ENCODE measurements at regions of chr11 and their contacts with region 1.

Region 1: DNA sequence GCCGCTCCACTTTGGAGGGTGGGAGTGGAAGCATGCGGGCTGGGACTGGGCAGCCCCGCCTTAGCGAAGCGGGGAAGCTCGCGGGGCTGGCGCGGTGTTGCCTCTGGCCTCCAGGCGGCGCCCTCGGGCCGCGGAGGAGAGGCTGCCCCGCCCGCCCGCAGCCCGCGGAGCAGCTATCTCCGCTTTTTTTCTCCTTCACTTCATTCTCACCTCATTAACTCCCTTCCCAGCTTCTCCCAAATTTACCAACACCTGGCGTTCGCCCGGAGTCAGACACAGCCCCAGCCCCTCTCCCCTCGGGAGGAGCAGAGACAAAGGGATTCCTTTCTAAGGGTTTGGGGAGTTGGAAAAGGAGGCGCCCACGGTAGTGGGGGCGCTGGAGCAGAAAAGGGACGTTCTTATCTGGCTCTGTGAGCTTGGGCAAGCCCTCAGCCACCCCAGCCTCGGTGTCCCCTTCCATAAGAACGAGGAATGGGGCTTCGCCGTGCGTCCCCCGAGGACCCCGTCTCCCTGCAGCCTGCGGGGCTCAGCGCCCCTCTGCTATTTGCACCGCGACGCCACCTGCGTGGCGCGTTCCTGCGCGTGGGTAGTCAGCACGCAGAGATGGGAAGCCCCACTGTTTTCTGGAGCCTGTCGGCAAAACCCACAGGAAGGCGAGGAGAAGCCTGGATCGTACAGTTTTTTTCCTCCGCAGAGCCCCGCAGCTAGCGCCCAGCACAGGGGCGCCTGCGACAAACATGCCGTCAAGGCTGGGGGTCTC is 1.5 kb upstream of the WNT11 start:
- DNase-seq: peak; percentile 79
- ATAC-seq: peak; percentile 73
- H3K4me3 Mint-ChIP-seq: peak overlapping the region; percentile 74
- H3K27ac Mint-ChIP-seq: no peak overlapping the region
- H3K4me1 Mint-ChIP-seq: peaks cover 23% of the 10 kb centered on the region
- H3K27me3 Mint-ChIP-seq: peaks cover 55% of the 10 kb centered on the region

Region 2: DNA sequence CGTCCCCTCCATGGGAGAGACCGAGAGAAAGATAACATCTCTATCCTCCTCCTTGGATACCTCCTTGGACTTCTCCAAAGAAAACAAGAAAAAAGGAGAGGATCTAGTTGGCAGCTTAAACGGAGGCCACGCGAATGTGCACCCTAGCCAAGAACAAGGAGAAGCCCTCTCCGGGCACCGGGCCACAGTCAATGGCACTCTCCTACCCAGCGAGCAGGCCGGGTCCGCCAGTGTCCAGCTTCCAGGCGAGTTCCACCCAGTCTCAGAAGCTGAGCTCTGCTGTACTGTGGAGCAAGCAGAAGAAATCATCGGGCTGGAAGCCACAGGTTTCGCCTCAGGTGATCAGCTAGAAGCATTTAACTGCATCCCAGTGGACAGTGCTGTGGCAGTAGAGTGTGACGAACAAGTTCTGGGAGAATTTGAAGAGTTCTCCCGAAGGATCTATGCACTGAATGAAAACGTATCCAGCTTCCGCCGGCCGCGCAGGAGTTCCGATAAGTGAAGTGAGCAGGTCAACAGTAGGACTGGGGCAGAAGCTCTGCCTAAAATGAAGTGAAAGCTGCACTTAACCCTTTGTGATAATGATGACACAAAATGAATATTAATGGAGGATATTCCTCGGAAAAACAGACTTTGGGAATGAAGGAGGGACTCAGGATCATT is 66.8 kb before region 1 on chr11:
- CTCF ChIA-PET with region 1: no interaction called
- POLR2A ChIA-PET with region 1: no interaction called
- DNase-seq: no peak
- ATAC-seq: no peak
- H3K4me3 Mint-ChIP-seq: no peak overlapping the region
- H3K27ac Mint-ChIP-seq: no peak overlapping the region
- H3K4me1 Mint-ChIP-seq: no peaks in the 10 kb centered on the region
- H3K27me3 Mint-ChIP-seq: no peaks in the 10 kb centered on the region

Region 3: GRCh38 chr11:76152086-76152681 is 55.6 kb before region 1 on chr11:
- CTCF ChIA-PET with region 1: interaction called, 19 read pairs
- POLR2A ChIA-PET with region 1: no interaction called
- DNase-seq: peak; percentile 88
- ATAC-seq: peak; percentile 95
- H3K4me3 Mint-ChIP-seq: peak overlapping the region; percentile 73
- H3K27ac Mint-ChIP-seq: peak overlapping the region; percentile 37
- H3K4me1 Mint-ChIP-seq: peaks cover 26% of the 10 kb centered on the region
- H3K27me3 Mint-ChIP-seq: peaks cover 7% of the 10 kb centered on the region

Region 4: DNA sequence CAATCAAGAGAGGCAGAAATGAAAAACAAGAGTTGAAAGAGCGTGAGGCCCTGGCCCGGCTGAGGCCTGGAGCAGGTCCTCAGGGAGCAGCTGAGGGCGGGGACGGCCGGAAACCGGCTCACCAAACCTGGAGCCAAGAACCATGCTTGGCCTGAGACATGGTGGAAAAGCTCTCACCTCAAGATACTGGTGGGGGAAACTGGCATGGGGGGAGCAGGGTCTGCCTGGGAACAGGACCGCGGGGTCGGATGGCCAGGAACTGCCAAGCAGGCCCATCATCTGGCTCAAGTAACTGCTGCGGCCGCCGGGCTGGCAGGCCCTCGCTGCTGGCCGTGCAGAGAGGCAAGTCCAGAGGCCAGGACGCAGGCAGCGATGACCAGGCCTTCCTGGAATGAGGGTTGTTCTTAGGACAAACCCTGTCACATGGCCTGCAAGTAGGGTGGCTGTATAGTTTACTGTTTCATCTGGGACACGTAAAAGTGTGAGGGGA is 17.3 kb after region 1 on chr11:
- CTCF ChIA-PET with region 1: interaction called, 58 read pairs
- POLR2A ChIA-PET with region 1: no interaction called
- DNase-seq: no peak
- ATAC-seq: no peak
- H3K4me3 Mint-ChIP-seq: no peak overlapping the region
- H3K27ac Mint-ChIP-seq: no peak overlapping the region
- H3K4me1 Mint-ChIP-seq: peaks cover 22% of the 10 kb centered on the region
- H3K27me3 Mint-ChIP-seq: peaks cover 12% of the 10 kb centered on the region

Region 5: GRCh38 chr11:76253416-76253815 is 45.6 kb after region 1 on chr11:
- CTCF ChIA-PET with region 1: interaction called, 10 read pairs
- POLR2A ChIA-PET with region 1: no interaction called
- DNase-seq: no peak
- ATAC-seq: no peak
- H3K4me3 Mint-ChIP-seq: no peak overlapping the region
- H3K27ac Mint-ChIP-seq: no peak overlapping the region
- H3K4me1 Mint-ChIP-seq: no peaks in the 10 kb centered on the region
- H3K27me3 Mint-ChIP-seq: peaks cover 3% of the 10 kb centered on the region

Region 6: GRCh38 chr11:76307396-76307795 is 99.6 kb after region 1 on chr11:
- CTCF ChIA-PET with region 1: interaction called, 29 read pairs
- POLR2A ChIA-PET with region 1: no interaction called
- DNase-seq: no peak
- ATAC-seq: no peak
- H3K4me3 Mint-ChIP-seq: no peak overlapping the region
- H3K27ac Mint-ChIP-seq: no peak overlapping the region
- H3K4me1 Mint-ChIP-seq: no peaks in the 10 kb centered on the region
- H3K27me3 Mint-ChIP-seq: peaks cover 8% of the 10 kb centered on the region

Region 7: DNA sequence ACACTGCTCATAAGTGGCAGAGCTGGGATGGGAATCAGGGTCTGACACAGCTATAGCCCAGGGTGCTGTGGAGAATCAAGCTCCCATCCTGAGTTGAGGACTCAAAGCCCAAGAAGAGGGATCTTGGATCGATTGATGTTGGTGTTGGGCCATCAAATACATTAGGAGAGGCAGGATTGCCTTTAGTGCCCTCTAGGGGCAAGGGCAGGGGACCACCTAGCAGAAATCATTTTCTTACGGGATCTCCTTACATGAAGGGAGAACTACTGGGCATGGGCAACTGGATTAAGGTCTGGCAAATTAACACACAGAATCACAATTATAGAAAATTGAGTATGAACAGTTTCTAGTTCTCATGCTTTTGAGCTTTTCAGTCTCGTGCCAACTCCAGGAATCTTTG is 212.1 kb after region 1 on chr11:
- CTCF ChIA-PET with region 1: interaction called, 10 read pairs
- POLR2A ChIA-PET with region 1: no interaction called
- DNase-seq: peak; percentile 33
- ATAC-seq: peak; percentile 65
- H3K4me3 Mint-ChIP-seq: no peak overlapping the region
- H3K27ac Mint-ChIP-seq: no peak overlapping the region
- H3K4me1 Mint-ChIP-seq: peaks cover 6% of the 10 kb centered on the region
- H3K27me3 Mint-ChIP-seq: peaks cover 13% of the 10 kb centered on the region

Region 8: DNA sequence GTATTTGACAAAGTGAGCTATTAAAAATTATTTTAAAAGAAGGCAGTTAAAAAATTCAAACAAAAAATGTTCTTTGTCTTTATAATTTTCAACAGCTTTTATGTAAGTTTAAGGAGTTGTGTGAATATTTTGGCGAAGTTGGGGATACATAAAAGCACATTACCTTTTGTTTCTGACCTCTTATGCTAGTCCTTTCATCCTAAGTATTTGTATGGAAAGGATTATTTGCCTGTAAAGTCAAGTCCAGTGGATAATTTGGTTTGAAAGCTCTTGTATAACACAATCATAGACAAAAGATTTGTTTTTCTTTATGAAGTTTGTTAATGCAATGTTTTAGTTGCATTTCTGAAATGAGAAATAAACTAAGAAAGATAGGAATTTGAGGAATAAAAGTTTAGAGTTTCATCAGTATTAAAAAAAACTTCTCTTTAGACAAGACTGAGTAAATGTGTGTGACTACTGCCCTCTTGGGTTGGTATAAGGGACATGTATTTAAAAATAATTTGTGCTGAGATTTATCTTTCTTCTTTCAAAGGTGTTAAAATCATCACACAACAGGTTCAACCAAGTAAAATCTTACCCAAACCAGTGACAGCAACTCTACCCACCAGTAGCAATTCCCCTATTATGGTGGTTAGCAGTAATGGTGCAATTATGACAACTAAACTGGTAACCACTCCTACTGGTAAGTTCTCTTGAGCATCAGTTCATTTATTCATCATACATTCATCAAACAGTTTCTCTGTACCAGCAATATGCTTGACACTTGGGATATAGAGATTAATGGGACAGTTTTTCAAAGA is 305.2 kb after region 1 on chr11:
- CTCF ChIA-PET with region 1: interaction called, 12 read pairs
- POLR2A ChIA-PET with region 1: no interaction called
- DNase-seq: no peak
- ATAC-seq: no peak
- H3K4me3 Mint-ChIP-seq: no peak overlapping the region
- H3K27ac Mint-ChIP-seq: no peak overlapping the region
- H3K4me1 Mint-ChIP-seq: no peaks in the 10 kb centered on the region
- H3K27me3 Mint-ChIP-seq: no peaks in the 10 kb centered on the region

Region 9: DNA sequence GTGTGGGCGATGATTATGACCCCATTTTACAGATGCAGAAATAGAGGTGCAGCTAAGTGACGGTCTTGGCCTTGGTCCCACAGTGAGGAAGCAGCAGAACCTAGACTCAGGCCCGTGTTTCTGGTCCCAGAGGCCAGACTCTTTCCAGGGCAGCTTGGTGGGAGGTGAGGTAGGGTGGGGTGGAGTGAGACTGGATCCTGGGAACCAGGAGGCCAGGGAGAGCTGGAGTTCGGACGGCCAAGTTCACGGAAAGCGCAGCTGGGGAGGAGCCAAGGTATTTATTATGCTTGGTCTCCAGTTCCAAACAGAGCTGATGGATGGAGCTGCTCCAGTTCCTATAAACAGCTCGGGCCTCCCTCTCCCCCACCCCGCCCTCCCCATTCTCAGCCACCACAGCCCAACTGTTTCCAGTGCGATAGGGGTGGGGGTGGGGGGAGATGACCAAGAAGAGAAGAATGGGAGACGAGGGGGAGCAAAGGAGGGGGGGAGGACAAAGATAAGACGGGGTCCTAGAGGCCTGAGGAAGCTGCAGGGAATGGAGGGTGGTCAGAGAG is 446.6 kb after region 1 on chr11:
- CTCF ChIA-PET with region 1: no interaction called
- POLR2A ChIA-PET with region 1: no interaction called
- DNase-seq: no peak
- ATAC-seq: no peak
- H3K4me3 Mint-ChIP-seq: no peak overlapping the region
- H3K27ac Mint-ChIP-seq: no peak overlapping the region
- H3K4me1 Mint-ChIP-seq: peaks cover 9% of the 10 kb centered on the region
- H3K27me3 Mint-ChIP-seq: peaks cover 13% of the 10 kb centered on the region